ENCODE measurements at regions of chr14 and their contacts with region 1.

Region 1: DNA sequence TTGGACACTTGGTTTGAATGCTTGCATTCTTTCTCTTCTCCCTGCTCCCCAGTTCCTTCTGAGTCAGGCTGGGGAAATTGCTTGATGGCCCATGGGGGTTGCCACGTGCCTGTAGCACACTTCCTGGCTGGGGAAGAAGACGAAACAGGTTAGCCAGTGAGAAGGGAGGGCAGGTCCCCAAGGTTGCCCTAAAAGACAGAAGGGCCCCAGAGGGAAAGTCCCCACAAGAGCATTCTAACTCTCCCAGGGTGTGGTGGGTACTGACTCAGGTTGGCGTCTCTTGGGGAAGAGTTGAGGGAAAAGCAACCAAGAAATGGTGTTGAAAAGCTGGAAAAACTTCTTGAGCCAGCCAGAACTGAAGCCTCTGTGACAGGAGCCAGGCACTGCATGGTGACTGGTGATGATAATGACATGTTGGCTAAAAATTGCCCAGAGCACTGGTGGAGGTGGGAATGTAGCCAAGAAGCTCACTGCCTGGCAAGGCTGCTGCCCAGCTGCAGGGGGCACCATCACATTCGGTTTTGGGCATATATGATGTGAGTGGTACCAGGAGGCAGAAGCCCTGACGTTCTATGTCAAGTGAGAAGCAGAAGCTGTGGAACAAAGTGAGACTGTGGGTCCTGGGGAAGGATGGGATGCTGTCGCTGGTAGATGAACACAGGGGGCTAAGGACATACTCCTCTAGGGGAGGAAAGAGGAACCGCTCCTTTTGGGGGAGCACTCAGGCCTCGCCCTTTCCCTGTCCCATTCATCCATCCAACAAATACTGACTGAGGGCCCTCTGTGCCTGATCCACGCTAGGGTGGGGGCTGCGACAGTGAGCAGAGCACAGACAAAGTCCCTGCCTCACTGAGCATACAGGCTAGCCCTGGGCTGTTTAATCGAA is 8.1 kb upstream of the RABGGTA start:
- DNase-seq: peak; percentile 53
- H3K4me3 Mint-ChIP-seq: no peak overlapping the region
- H3K27ac Mint-ChIP-seq: no peak overlapping the region
- H3K4me1 Mint-ChIP-seq: peaks cover 18% of the 10 kb centered on the region
- H3K27me3 Mint-ChIP-seq: no peaks in the 10 kb centered on the region
- CTCF ChIP-seq: peak; percentile 25

Region 2: DNA sequence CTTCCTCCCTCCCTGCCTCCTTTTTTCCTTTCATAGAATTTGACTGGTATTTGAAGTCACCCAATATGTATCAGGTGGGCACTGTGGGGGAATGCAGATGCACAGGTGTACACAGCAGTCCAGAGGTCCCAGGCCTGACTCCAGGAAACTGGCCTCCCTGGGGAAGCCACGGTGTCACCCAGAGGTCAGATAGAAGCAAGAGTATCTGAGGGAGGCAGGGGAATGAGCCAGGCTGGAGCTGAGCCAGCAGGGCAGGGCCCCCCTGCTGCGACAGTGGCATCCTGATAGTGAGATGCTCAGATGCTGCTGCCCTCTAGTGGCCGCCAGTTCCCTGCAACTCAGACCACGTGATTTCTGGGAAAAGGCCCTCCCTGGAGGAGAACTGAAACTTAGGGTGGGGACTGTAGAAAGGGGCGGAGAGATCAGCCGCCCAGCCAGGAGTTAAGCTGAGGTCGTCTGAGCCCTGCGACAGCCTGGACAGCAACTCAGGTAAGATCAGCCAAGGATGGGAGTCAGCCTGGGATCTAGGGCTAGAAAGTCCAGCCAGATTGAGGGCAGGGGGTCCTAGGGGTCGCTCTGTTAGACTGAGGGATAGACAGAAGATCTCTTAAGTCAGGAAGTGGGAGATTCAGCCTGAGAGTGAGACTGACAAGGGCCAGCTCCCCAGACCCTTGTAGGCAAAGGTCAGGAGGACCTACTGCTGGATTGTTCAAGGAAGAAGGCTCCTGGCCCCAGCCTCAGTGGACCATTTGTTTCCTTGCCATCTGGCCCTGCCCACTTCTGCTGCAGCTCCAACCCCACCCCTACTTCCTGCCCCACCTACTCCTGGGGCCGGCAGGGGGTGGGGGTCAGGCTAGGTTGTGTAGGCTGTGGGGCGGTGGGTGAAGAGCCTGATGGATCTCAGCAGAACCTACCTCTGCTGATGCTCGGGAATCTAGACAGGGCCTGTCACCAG is 118.4 kb before region 1 on chr14 and contains the start of gene IRF9:
- CTCF ChIA-PET with region 1: no interaction called
- intact Hi-C with region 1: no loop called
- DNase-seq: peak; percentile 96
- H3K4me3 Mint-ChIP-seq: peak within 1 kb of the TSS; percentile 76
- H3K27ac Mint-ChIP-seq: peak within 1 kb of the TSS; percentile 86
- H3K4me1 Mint-ChIP-seq: peaks cover 15% of the 10 kb centered on the region
- H3K27me3 Mint-ChIP-seq: no peaks in the 10 kb centered on the region
- CTCF ChIP-seq: peak; percentile 75
- total RNA-seq, gene IRF9: 124 and 184 TPM in 2 replicates

Region 3: GRCh38 chr14:24299255-24300195 is 20.0 kb after region 1 on chr14 and contains the starts of genes DHRS1 and NOP9:
- CTCF ChIA-PET with region 1: interaction called, 9 read pairs
- intact Hi-C with region 1: loop called (anchors 2 kb)
- DNase-seq: peak; percentile 94
- H3K4me3 Mint-ChIP-seq: peak within 1 kb of the TSS; percentile 90
- H3K27ac Mint-ChIP-seq: peak within 1 kb of the TSS; percentile 88
- H3K4me1 Mint-ChIP-seq: peaks cover 32% of the 10 kb centered on the region
- H3K27me3 Mint-ChIP-seq: no peaks in the 10 kb centered on the region
- CTCF ChIP-seq: no peak
- total RNA-seq, gene DHRS1: 18.6 and 19.7 TPM in 2 replicates
- total RNA-seq, gene NOP9: 35.9 and 40.2 TPM in 2 replicates